Endothelial cell of umbilical vein (primary cell): ENCODE measurements at regions of chr6 and their contacts with region 1.

Region 1: GRCh38 chr6:100573167-100573566 is 108.4 kb upstream of the SIM1 start:
- DNase-seq: peak; percentile 54
- H3K4me3 ChIP-seq: no peak overlapping the region
- H3K27ac ChIP-seq: no peak overlapping the region
- H3K4me1 ChIP-seq: no peaks in the 10 kb centered on the region
- H3K27me3 ChIP-seq: no peaks in the 10 kb centered on the region
- CTCF ChIP-seq: peak; percentile 27 to 28
- POLR2A ChIP-seq: no peak

Region 2: GRCh38 chr6:100479179-100480035 is 93.8 kb before region 1 on chr6:
- CTCF ChIA-PET with region 1: interaction called, 3 read pairs
- POLR2A ChIA-PET with region 1: no interaction called
- dilution Hi-C with region 1: no loop called
- intact Hi-C with region 1: loop called (anchors 5 kb)
- DNase-seq: peak; percentile 68
- H3K4me3 ChIP-seq: no peak overlapping the region
- H3K27ac ChIP-seq: no peak overlapping the region
- H3K4me1 ChIP-seq: no peaks in the 10 kb centered on the region
- H3K27me3 ChIP-seq: peaks cover 0 to 5% of the 10 kb centered on the region in 2 experiments
- CTCF ChIP-seq: peak; percentile 40 to 55
- POLR2A ChIP-seq: no peak

Region 3: GRCh38 chr6:100657678-100658330 is 84.6 kb after region 1 on chr6:
- CTCF ChIA-PET with region 1: interaction called, 3 read pairs
- POLR2A ChIA-PET with region 1: no interaction called
- dilution Hi-C with region 1: no loop called
- intact Hi-C with region 1: loop called (anchors 5 kb)
- DNase-seq: peak; percentile 39
- H3K4me3 ChIP-seq: no peak overlapping the region
- H3K27ac ChIP-seq: no peak overlapping the region
- H3K4me1 ChIP-seq: no peaks in the 10 kb centered on the region
- H3K27me3 ChIP-seq: no peaks in the 10 kb centered on the region
- CTCF ChIP-seq: peak; percentile 22 to 29
- POLR2A ChIP-seq: no peak